WTC11 (cell line): ENCODE measurements at regions of chr4 and their contacts with region 1.

Region 1: DNA sequence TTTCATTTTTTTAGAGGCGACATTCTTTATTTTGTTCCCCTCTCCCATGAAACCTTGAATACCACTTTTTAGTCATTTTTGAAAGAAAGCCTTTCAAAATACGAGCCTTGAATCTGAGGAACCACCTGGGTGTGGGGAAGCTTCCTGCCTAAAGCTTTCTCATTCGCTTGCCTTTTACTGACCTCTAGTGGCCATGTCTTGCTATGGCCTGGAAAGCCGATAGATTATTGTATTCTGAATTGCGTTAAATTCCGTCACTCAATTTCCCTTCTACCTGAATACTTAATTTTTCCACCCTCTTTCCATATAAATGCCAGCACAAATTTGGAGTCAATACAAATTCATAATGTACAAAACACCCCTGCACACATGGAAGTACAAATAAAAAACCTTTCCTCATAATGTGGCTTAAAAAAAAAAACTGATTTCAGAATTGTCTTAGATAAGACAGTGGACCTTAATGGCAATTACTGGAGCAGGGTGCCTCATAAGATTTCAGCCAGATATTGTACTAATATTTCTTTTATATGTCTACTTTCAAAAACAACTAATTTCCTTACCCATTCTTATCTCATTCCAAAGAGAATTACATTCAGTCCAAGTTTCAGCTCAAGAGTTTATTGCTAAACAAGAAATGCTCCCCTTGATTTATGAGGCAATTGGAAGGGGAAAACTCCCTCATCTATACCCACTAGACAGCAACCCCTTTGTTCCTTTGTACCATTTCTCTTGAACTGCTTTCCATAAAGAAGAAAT is 217.9 kb downstream of the CENPC start:
- DNase-seq: peak; percentile 63
- ATAC-seq: peak; percentile 90
- H3K4me3 Mint-ChIP-seq: no peak overlapping the region
- H3K27ac Mint-ChIP-seq: no peak overlapping the region
- H3K4me1 Mint-ChIP-seq: peaks cover 16% of the 10 kb centered on the region
- H3K27me3 Mint-ChIP-seq: peaks cover 11% of the 10 kb centered on the region
- CTCF ChIP-seq: peak; percentile 61

Region 2: DNA sequence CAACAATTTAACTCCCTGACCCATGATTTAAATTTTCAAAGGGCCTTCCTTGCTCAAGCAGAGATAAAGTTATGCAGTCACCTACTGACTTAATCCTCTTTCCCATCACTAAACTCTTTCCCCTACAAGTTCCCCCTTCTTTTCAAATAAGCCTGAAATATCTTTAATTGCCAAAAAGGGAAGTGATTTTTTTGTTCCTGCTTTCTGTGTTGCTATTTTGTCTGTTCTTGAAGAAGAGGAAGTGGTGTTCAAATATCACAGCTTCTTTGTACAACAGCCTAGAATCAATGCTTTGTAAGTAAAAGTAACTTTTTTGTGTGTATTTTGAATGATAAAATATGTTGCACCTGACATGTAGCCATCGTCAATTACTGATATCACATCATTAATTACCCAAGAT is 378.0 kb before region 1 on chr4:
- CTCF ChIA-PET with region 1: no interaction called
- POLR2A ChIA-PET with region 1: no interaction called
- DNase-seq: no peak
- ATAC-seq: no peak
- H3K4me3 Mint-ChIP-seq: no peak overlapping the region
- H3K27ac Mint-ChIP-seq: peak overlapping the region; percentile 3; the same call in 1 of the 2 replicates
- H3K4me1 Mint-ChIP-seq: peaks cover 12% of the 10 kb centered on the region
- H3K27me3 Mint-ChIP-seq: no peaks in the 10 kb centered on the region
- CTCF ChIP-seq: no peak

Region 3: GRCh38 chr4:67087897-67088296 is 239.5 kb before region 1 on chr4:
- CTCF ChIA-PET with region 1: interaction called, 13 read pairs
- POLR2A ChIA-PET with region 1: no interaction called
- DNase-seq: peak; percentile 64
- ATAC-seq: peak; percentile 70
- H3K4me3 Mint-ChIP-seq: no peak overlapping the region
- H3K27ac Mint-ChIP-seq: no peak overlapping the region
- H3K4me1 Mint-ChIP-seq: peaks cover 26% of the 10 kb centered on the region
- H3K27me3 Mint-ChIP-seq: no peaks in the 10 kb centered on the region
- CTCF ChIP-seq: peak; percentile 68

Region 4: DNA sequence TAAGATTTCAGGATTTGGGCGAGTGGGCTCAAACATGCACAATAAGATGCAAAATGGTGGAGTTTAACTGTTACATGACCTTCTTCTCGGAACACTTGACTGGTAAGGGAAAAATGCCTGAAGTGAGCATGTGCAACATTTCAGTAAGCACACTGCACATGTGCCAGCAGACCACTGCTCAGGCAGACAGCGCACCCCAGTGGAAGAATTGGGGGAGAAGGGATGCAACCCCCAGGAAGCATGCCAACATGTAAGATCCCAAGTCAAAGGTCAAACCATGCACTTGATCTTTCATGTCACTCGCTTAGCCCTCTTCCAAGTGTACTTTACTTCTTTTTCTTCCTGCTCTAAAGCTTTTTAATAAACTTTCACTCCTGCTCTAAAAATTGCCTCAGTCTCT is 38.5 kb before region 1 on chr4:
- CTCF ChIA-PET with region 1: interaction called, 13 read pairs
- POLR2A ChIA-PET with region 1: no interaction called
- DNase-seq: peak; percentile 73
- ATAC-seq: peak; percentile 93
- H3K4me3 Mint-ChIP-seq: no peak overlapping the region
- H3K27ac Mint-ChIP-seq: no peak overlapping the region
- H3K4me1 Mint-ChIP-seq: peaks cover 11% of the 10 kb centered on the region
- H3K27me3 Mint-ChIP-seq: peaks cover 7% of the 10 kb centered on the region
- CTCF ChIP-seq: peak; percentile 44; the same call in 1 of the 2 replicates